Activated CD4-positive, alpha-beta memory T cell treated with anti-CD3 and anti-CD28 coated beads for 36 hours (primary cell): ENCODE measurements at regions of chr10 and their contacts with region 1.

Region 1: DNA sequence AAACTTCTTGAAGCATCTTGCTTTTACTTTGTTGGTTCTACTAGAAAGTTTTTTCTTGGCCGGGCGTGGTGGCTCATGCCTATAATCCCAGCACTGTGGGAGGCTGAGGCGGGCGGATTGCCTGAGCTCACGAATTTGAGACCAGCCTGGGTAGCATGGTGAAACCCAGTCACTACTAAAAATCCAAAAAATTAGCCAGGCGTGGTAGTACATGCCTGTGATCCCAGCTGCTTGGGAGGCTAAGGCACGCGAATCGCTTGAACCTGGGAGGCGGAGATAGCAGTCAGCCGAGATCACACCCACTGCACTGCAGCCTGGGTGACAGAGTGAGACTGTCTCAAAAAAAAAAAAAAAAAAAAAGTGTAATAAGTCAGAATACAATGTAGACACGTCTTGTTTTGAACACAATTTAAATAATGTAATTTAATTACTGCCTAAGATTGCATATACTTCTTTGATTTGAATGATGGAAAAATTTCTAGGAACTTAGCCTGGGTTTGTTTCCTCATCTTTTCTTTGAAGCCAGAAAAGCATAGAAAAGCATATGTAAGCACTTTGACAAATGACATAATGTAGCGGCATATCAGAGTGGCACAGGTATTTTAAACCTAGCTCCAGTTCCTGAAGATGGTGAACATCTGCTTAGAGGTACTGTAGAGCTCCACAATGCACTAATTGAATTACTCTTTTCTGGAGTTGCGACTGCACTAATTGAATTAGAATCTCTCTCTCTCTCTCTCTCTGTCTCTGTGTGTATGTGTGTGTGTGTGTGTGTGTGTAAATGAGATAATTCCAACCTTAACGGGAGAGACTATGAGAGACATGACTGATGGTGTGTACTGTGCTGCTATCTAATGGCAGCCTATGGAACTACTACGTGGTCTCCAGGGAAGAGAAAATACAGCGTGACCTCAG is 87.8 kb downstream of the BTRC start:
- DNase-seq: peak; percentile 12
- H3K4me3 Mint-ChIP-seq: no peak overlapping the region
- H3K27ac Mint-ChIP-seq: no peak overlapping the region
- H3K4me1 Mint-ChIP-seq: peaks cover 8% of the 10 kb centered on the region
- H3K27me3 Mint-ChIP-seq: no peaks in the 10 kb centered on the region

Region 2: DNA sequence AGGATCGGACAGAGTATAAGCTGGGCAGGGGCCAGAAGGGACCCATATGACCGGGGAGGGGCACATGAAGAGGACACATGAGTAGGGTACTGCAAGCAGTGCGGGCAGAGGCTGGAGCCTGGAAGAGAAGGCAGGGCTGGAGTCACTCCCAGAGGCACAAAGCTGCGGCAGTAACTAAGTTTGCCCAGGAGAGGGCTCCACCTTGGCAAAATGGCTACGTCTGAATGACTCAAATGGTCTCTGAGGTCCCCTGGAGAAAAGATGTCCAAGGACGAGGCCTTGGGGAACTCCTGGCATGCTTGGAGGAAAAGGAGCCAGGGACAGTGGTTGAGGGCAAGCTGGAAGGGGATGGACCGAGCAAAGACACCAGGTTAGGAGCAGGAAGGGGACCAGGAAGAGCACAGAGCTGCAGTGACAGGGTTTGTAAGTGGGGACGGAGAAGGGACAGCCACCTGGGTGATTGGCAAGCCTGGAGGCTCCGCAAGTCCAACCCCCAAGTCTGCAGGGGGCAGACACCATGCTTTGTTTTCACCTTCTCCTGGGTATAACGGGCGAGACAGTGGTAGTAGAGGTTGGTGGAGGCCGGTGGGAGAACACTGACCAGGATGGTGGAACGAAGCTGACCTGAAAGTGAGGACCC is 169.4 kb before region 1 on chr10:
- CTCF ChIA-PET with region 1: interaction called, 40 read pairs
- POLR2A ChIA-PET with region 1: no interaction called
- intact Hi-C with region 1: loop called (anchors 1 kb)
- DNase-seq: peak; percentile 73
- H3K4me3 Mint-ChIP-seq: no peak overlapping the region
- H3K27ac Mint-ChIP-seq: no peak overlapping the region
- H3K4me1 Mint-ChIP-seq: no peaks in the 10 kb centered on the region
- H3K27me3 Mint-ChIP-seq: peaks cover 15% of the 10 kb centered on the region

Region 3: DNA sequence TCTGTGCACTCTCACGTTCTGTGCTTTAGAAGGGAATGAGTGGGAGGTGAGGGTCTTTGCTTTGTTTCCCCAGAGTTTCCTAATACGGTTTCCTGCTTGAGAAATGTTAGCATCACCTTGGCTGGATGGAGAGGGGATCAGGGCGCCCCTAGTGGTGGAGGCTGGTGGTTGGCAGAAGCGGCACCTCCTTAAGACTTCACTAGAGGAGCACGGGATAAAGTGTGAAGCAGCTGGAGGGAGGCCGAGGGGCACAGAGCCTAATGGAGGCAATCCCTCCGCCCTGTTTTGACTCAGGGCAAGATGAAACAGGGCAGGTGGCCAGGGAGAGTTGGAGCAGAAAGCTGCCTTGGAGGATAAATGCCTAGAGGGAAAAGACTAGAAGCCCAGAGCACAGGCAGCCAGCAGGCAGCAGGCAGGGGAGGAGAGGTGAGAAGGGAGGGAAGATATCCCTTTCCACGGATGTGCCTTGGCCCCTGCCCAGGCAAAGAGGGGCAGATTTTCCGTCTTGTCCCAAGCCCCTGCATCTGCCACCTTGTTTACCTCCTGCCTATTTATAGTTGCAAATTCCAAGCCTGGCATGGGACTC is 143.8 kb before region 1 on chr10:
- CTCF ChIA-PET with region 1: interaction called, 60 read pairs
- POLR2A ChIA-PET with region 1: no interaction called
- intact Hi-C with region 1: loop called (anchors 1 kb)
- DNase-seq: peak; percentile 84
- H3K4me3 Mint-ChIP-seq: no peak overlapping the region
- H3K27ac Mint-ChIP-seq: no peak overlapping the region
- H3K4me1 Mint-ChIP-seq: no peaks in the 10 kb centered on the region
- H3K27me3 Mint-ChIP-seq: peaks cover 39% of the 10 kb centered on the region

Region 4: GRCh38 chr10:101429423-101429822 is 12.4 kb before region 1 on chr10:
- CTCF ChIA-PET with region 1: interaction called, 12 read pairs
- POLR2A ChIA-PET with region 1: no interaction called
- intact Hi-C with region 1: no loop called
- DNase-seq: no peak
- H3K4me3 Mint-ChIP-seq: no peak overlapping the region
- H3K27ac Mint-ChIP-seq: no peak overlapping the region
- H3K4me1 Mint-ChIP-seq: peaks cover 3% of the 10 kb centered on the region
- H3K27me3 Mint-ChIP-seq: no peaks in the 10 kb centered on the region

Region 5: GRCh38 chr10:101467286-101467770 is 25.5 kb after region 1 on chr10:
- CTCF ChIA-PET with region 1: interaction called, 33 read pairs
- POLR2A ChIA-PET with region 1: interaction called, 3 read pairs
- intact Hi-C with region 1: no loop called
- DNase-seq: peak; percentile 15
- H3K4me3 Mint-ChIP-seq: no peak overlapping the region
- H3K27ac Mint-ChIP-seq: no peak overlapping the region
- H3K4me1 Mint-ChIP-seq: peaks cover 2% of the 10 kb centered on the region
- H3K27me3 Mint-ChIP-seq: no peaks in the 10 kb centered on the region

Region 6: GRCh38 chr10:101481256-101481655 is 39.5 kb after region 1 on chr10:
- CTCF ChIA-PET with region 1: no interaction called
- POLR2A ChIA-PET with region 1: no interaction called
- intact Hi-C with region 1: no loop called
- DNase-seq: no peak
- H3K4me3 Mint-ChIP-seq: no peak overlapping the region
- H3K27ac Mint-ChIP-seq: no peak overlapping the region
- H3K4me1 Mint-ChIP-seq: no peaks in the 10 kb centered on the region
- H3K27me3 Mint-ChIP-seq: no peaks in the 10 kb centered on the region